ENCODE measurements at regions of chr16 and their contacts with region 1.

Region 1: DNA sequence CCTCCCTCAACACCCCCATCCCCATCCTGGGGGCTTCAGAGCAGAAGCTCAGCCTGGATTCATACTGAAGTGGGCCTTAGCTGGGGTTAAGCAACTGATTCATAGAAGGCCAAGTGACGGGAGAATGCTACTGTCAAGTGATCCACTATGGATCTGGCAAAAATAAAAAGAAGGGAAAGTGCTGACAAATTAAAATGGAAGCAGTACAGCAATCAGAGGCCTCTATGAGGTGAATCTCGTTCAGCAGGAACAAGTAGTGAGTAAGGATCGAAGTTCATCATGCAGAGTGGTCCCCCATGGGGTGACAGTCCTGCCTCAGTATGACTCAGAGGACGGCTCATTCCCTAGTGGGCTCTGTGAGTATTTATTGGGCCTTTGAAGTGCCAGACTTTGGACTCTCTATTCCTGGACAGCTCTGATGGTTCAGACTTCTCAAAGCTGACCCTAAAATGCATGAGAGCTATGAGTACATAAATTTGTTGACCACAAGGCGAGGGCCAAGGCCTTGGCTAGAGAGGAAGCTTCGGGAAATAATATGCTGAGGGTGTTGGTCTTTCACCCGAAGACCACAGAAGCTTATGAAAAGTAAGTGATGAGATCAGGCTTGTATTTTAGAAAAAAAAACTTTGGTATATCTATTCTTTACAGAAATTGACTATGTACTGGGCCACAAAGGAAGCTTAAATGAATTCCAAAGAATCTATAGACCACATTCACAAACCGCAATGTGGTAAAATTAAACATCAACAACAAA is 5.3 kb upstream of the NSMCE1 start:
- DNase-seq: peak; percentile 100
- ATAC-seq: peak; percentile 98
- H3K4me3 ChIP-seq: peak overlapping the region; percentile 9 to 55 (median 24); a peak in 4 of 6 replicates
- H3K27ac ChIP-seq: peak overlapping the region; percentile 96
- H3K4me1 ChIP-seq: peaks cover 62% of the 10 kb centered on the region
- H3K27me3 ChIP-seq: no peaks in the 10 kb centered on the region
- CTCF ChIP-seq: peak; percentile 40; the same call in 1 of the 2 replicates
- EP300 ChIP-seq: peak; percentile 97 to 98
- POLR2A ChIP-seq: peak in 1 of 2 experiments; percentile 43; a peak in 1 of 4 replicates
- RAD21 ChIP-seq: peak; percentile 81

Region 2: DNA sequence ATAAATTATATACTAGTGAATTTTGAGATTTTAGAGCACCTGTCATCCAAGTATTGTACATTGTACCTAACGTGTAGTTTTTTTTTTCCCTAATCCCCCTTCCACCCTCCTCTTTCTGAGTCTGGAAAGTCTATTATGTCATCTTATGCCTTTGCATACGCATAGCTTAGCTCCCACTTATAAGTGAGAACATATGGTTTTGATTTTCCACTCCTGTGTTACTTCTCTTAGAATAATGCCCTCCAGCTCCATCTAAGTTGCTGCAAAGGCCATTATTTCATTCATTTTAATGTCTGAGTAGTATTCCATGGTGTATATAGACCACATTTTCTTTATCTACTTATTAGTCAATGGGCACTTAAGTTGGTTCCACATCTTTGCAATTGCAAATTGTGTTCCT is 384.1 kb before region 1 on chr16:
- CTCF ChIA-PET with region 1: no interaction called
- POLR2A ChIA-PET with region 1: no interaction called
- in situ Hi-C with region 1: no loop called
- intact Hi-C with region 1: no loop called
- DNase-seq: no peak
- ATAC-seq: no peak
- H3K4me3 ChIP-seq: no peak overlapping the region
- H3K27ac ChIP-seq: no peak overlapping the region
- H3K4me1 ChIP-seq: no peaks in the 10 kb centered on the region
- H3K27me3 ChIP-seq: no peaks in the 10 kb centered on the region
- CTCF ChIP-seq: no peak
- EP300 ChIP-seq: no peak
- POLR2A ChIP-seq: no peak
- RAD21 ChIP-seq: no peak

Region 3: GRCh38 chr16:27286451-27286850 is 12.6 kb after region 1 on chr16:
- CTCF ChIA-PET with region 1: no interaction called
- POLR2A ChIA-PET with region 1: interaction called, 17 read pairs
- in situ Hi-C with region 1: no loop called
- intact Hi-C with region 1: no loop called
- DNase-seq: peak; percentile 64
- ATAC-seq: peak; percentile 33; the same call in 2 of the 3 replicates
- H3K4me3 ChIP-seq: no peak overlapping the region
- H3K27ac ChIP-seq: no peak overlapping the region
- H3K4me1 ChIP-seq: peaks cover 45% of the 10 kb centered on the region
- H3K27me3 ChIP-seq: no peaks in the 10 kb centered on the region; a peak in 1 of 5 replicates
- CTCF ChIP-seq: no peak
- EP300 ChIP-seq: no peak; a peak in 1 of 4 replicates
- POLR2A ChIP-seq: no peak
- RAD21 ChIP-seq: no peak

Region 4: GRCh38 chr16:27313422-27314160 is 39.7 kb after region 1 on chr16 and contains the start of gene IL4R:
- CTCF ChIA-PET with region 1: no interaction called
- POLR2A ChIA-PET with region 1: interaction called, 10 read pairs
- in situ Hi-C with region 1: loop called (anchors 5 kb)
- intact Hi-C with region 1: loop called (anchors 1 kb)
- DNase-seq: peak; percentile 94
- ATAC-seq: peak; percentile 84
- H3K4me3 ChIP-seq: peak within 1 kb of the TSS; percentile 88 to 99 (median 97)
- H3K27ac ChIP-seq: peak within 1 kb of the TSS; percentile 75
- H3K4me1 ChIP-seq: peaks cover 74% of the 10 kb centered on the region
- H3K27me3 ChIP-seq: peaks cover 1 to 17% of the 10 kb centered on the region in 2 experiments; a peak in 3 of 5 replicates
- CTCF ChIP-seq: no peak
- EP300 ChIP-seq: peak in 1 of 2 experiments; percentile 32; a peak in 1 of 4 replicates
- POLR2A ChIP-seq: peak; percentile 63 to 91
- RAD21 ChIP-seq: peak; percentile 23
- total RNA-seq, gene IL4R: 7.6 and 15.9 TPM in 2 replicates

Measured in HepG2 (cell line).